OCI-LY7 (cell line): ENCODE measurements at regions of chr2 and their contacts with region 1.

Region 1: GRCh38 chr2:78979380-78980151 is 45.9 kb upstream of the REG3G start:
- DNase-seq: peak; percentile 82
- H3K4me3 ChIP-seq: no peak overlapping the region
- H3K27ac ChIP-seq: no peak overlapping the region
- H3K4me1 ChIP-seq: peaks cover 45% of the 10 kb centered on the region
- CTCF ChIP-seq: peak; percentile 97

Region 2: DNA sequence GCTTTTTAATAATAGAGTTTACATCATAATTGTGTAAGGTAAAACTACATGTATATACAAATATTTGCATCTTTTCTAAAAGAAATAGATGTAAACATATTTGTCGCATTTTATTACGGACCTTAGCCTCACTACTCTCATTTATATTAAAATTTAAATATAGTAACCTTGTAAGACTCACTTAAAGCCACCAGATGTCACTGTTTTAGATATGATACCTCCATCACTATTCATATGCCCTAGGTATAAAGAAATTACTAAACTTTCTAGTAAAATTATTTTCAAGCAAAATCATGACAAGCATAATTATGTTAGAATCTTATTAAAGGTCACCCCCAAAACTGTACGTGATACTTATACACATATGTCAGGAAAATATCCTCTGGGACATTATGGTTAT is 628.4 kb before region 1 on chr2:
- CTCF ChIA-PET with region 1: no interaction called
- POLR2A ChIA-PET with region 1: interaction called, 3 read pairs
- intact Hi-C with region 1: loop called (anchors 1 kb)
- DNase-seq: peak; percentile 35
- H3K4me3 ChIP-seq: no peak overlapping the region
- H3K27ac ChIP-seq: no peak overlapping the region
- H3K4me1 ChIP-seq: no peaks in the 10 kb centered on the region
- CTCF ChIP-seq: peak; percentile 73

Region 3: GRCh38 chr2:78676921-78677696 is 302.5 kb before region 1 on chr2:
- CTCF ChIA-PET with region 1: no interaction called
- POLR2A ChIA-PET with region 1: interaction called, 5 read pairs
- intact Hi-C with region 1: loop called (anchors 1 kb)
- DNase-seq: peak; percentile 10
- H3K4me3 ChIP-seq: no peak overlapping the region
- H3K27ac ChIP-seq: no peak overlapping the region
- H3K4me1 ChIP-seq: no peaks in the 10 kb centered on the region
- CTCF ChIP-seq: no peak

Region 4: GRCh38 chr2:78870343-78870967 is 109.1 kb before region 1 on chr2:
- CTCF ChIA-PET with region 1: no interaction called
- POLR2A ChIA-PET with region 1: interaction called, 7 read pairs
- intact Hi-C with region 1: loop called (anchors 5 kb)
- DNase-seq: no peak
- H3K4me3 ChIP-seq: no peak overlapping the region
- H3K27ac ChIP-seq: no peak overlapping the region
- H3K4me1 ChIP-seq: no peaks in the 10 kb centered on the region
- CTCF ChIP-seq: no peak

Region 5: GRCh38 chr2:78887446-78887845 is 92.1 kb before region 1 on chr2:
- CTCF ChIA-PET with region 1: no interaction called
- POLR2A ChIA-PET with region 1: interaction called, 4 read pairs
- intact Hi-C with region 1: loop called (anchors 1 kb)
- DNase-seq: peak; percentile 82
- H3K4me3 ChIP-seq: peak overlapping the region; percentile 53
- H3K27ac ChIP-seq: peak overlapping the region; percentile 85
- H3K4me1 ChIP-seq: peaks cover 45% of the 10 kb centered on the region
- CTCF ChIP-seq: no peak